Naive thymus-derived CD4-positive, alpha-beta T cell (primary cell): ENCODE measurements at regions of chr22 and their contacts with region 1.

Region 1: GRCh38 chr22:41780746-41781505 is 19.6 kb upstream of the CCDC134 start:
- DNase-seq: peak; percentile 64 to 99 (median 96)
- ATAC-seq: peak; percentile 97
- H3K4me3 ChIP-seq: peak overlapping the region; percentile 67
- H3K4me3 Mint-ChIP-seq: peak overlapping the region; percentile 77 to 93 (median 89)
- H3K27ac ChIP-seq: peak overlapping the region; percentile 88
- H3K27ac Mint-ChIP-seq: peak overlapping the region; percentile 98 to 100 (median 100)
- H3K4me1 ChIP-seq: peaks cover 19 to 25% of the 10 kb centered on the region in 2 donors
- H3K4me1 Mint-ChIP-seq: peaks cover 32 to 71% (median 51%) of the 10 kb centered on the region in 7 donors
- H3K27me3 ChIP-seq: no peaks in the 10 kb centered on the region
- H3K27me3 Mint-ChIP-seq: no peaks in the 10 kb centered on the region

Region 2: GRCh38 chr22:40898850-40899357 is 882.0 kb before region 1 on chr22:
- CTCF ChIA-PET with region 1: no interaction called
- POLR2A ChIA-PET with region 1: no interaction called
- intact Hi-C with region 1: no loop called
- DNase-seq: peak in 7 of 9 donors; percentile 12 to 52 (median 37)
- ATAC-seq: peak; percentile 67
- H3K4me3 ChIP-seq: no peak overlapping the region
- H3K4me3 Mint-ChIP-seq: peak overlapping the region in 1 of 10 donors; percentile 28
- H3K27ac ChIP-seq: no peak overlapping the region
- H3K27ac Mint-ChIP-seq: peak overlapping the region in 2 of 9 donors; percentile 36 to 44
- H3K4me1 ChIP-seq: no peaks in the 10 kb centered on the region
- H3K4me1 Mint-ChIP-seq: peaks cover 4 to 9% (median 5%) of the 10 kb centered on the region in 7 donors
- H3K27me3 ChIP-seq: no peaks in the 10 kb centered on the region
- H3K27me3 Mint-ChIP-seq: no peaks in the 10 kb centered on the region

Region 3: DNA sequence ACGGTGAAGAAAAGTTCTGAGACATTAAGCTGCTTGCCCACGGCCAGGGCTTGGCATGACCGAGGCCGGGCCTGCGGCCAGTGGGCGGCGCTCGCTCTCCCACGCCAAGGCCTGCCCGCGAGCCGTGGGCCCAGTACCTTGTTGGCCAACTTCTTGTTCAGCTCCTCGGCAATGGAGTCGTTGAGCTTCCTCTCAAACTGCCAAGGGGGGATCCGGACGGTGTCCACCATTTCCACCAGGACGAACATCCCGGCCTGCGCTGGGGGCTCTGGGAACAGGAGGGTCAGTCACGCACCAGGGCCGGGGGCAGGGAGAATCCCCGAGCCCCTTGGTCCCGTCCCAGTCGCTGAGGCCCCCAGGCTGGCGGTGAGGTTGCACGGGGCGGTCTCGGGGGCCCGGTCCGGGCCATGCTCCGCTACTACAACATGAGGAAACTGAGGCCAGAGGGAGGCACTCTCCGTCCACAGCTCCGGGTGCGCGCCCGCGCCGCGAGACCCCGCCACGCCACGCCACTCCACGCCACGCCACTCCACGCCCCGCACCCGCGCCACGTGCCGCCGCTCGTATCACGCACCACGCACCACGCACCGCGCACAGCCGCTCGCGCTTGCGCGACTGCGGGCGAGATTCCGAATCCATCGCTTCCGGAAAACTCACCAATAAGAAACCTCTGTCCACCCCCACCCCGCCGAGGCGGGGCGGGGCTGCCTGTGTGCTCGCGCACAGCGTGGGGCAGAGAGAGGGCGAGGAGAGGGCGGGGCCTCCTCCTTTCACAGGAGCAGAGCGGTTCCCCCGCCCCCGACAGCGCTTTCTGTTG is 236.9 kb before region 1 on chr22 and contains the start of gene POLR3H:
- CTCF ChIA-PET with region 1: no interaction called
- POLR2A ChIA-PET with region 1: no interaction called
- intact Hi-C with region 1: loop called in 1 of 2 experiments (anchors 2 kb)
- DNase-seq: peak; percentile 89 to 97 (median 95)
- ATAC-seq: peak; percentile 100
- H3K4me3 ChIP-seq: peak within 1 kb of the TSS; percentile 96
- H3K4me3 Mint-ChIP-seq: peak within 1 kb of the TSS; percentile 82 to 100 (median 97)
- H3K27ac ChIP-seq: peak within 1 kb of the TSS; percentile 84
- H3K27ac Mint-ChIP-seq: peak within 1 kb of the TSS; percentile 88 to 98 (median 95)
- H3K4me1 ChIP-seq: peaks cover 7 to 15% of the 10 kb centered on the region in 2 donors
- H3K4me1 Mint-ChIP-seq: peaks cover 30 to 52% (median 45%) of the 10 kb centered on the region in 7 donors
- H3K27me3 ChIP-seq: no peaks in the 10 kb centered on the region
- H3K27me3 Mint-ChIP-seq: no peaks in the 10 kb centered on the region
- total RNA-seq, gene POLR3H: 21.7 to 59.6 (median 28.5) TPM

Region 4: DNA sequence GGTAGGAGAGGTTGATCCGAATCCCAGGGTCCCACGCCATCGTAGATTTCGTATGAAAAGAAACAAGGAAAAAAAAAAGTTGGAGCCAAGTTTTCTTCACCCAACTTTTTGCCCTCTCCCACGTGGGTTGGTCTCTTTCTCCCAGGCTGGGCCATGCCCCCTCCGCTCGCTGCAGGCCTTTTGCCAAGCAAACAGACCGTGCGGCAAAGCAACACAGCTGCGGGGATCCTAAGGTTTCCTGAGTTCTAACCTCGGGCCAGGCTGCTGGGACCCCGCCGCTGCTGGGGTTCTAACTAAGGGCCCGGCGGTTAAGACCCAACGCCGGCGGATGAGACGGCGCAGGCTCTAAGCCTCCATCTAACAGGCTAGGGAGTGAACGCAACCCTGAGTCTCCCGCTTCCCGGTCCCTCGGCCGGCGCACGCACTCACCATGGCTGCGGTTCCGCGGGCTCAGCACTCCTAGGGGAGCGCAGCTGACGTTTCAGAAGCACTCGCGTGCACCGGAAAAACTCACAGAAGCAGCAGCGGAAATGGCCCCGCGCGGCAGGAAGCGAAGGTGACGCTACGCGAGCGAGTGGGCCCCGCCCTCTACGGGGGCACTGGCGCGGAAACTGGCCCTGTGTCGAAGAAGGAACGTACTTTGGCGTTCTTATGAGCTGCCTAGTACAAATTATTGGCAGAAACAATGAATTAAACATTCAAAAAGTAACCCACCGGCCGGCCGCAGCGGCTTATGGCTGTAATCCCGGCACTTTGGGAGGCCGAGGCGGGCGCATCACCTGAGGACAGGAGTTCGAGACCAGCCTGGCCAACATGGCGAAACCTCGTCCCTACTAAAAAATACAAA is 92.3 kb before region 1 on chr22 and contains the start of gene SNU13:
- CTCF ChIA-PET with region 1: no interaction called
- POLR2A ChIA-PET with region 1: interaction called, 10 read pairs
- intact Hi-C with region 1: loop called (anchors 2 kb)
- DNase-seq: peak; percentile 79 to 94 (median 92)
- ATAC-seq: peak; percentile 97
- H3K4me3 ChIP-seq: peak within 1 kb of the TSS; percentile 98
- H3K4me3 Mint-ChIP-seq: peak within 1 kb of the TSS; percentile 90 to 100 (median 96)
- H3K27ac ChIP-seq: peak within 1 kb of the TSS; percentile 95
- H3K27ac Mint-ChIP-seq: peak within 1 kb of the TSS; percentile 94 to 100 (median 99)
- H3K4me1 ChIP-seq: peaks cover 12 to 13% of the 10 kb centered on the region in 2 donors
- H3K4me1 Mint-ChIP-seq: peaks cover 18 to 51% (median 37%) of the 10 kb centered on the region in 7 donors
- H3K27me3 ChIP-seq: no peaks in the 10 kb centered on the region
- H3K27me3 Mint-ChIP-seq: no peaks in the 10 kb centered on the region
- total RNA-seq, gene SNU13: 117 to 180 (median 122) TPM

Region 5: GRCh38 chr22:41746567-41747400 is 34.1 kb before region 1 on chr22:
- CTCF ChIA-PET with region 1: interaction called, 30 read pairs
- POLR2A ChIA-PET with region 1: interaction called, 11 read pairs
- intact Hi-C with region 1: loop called in 1 of 2 experiments (anchors 1 kb)
- DNase-seq: peak; percentile 23 to 65 (median 52)
- ATAC-seq: peak; percentile 92
- H3K4me3 ChIP-seq: no peak overlapping the region
- H3K4me3 Mint-ChIP-seq: no peak overlapping the region
- H3K27ac ChIP-seq: no peak overlapping the region
- H3K27ac Mint-ChIP-seq: peak overlapping the region in 2 of 9 donors; percentile 2 to 36
- H3K4me1 ChIP-seq: no peaks in the 10 kb centered on the region
- H3K4me1 Mint-ChIP-seq: peaks cover 0 to 6% (median 0%) of the 10 kb centered on the region in 7 donors
- H3K27me3 ChIP-seq: no peaks in the 10 kb centered on the region
- H3K27me3 Mint-ChIP-seq: peaks cover 0 to 48% (median 0%) of the 10 kb centered on the region in 5 donors

Region 6: DNA sequence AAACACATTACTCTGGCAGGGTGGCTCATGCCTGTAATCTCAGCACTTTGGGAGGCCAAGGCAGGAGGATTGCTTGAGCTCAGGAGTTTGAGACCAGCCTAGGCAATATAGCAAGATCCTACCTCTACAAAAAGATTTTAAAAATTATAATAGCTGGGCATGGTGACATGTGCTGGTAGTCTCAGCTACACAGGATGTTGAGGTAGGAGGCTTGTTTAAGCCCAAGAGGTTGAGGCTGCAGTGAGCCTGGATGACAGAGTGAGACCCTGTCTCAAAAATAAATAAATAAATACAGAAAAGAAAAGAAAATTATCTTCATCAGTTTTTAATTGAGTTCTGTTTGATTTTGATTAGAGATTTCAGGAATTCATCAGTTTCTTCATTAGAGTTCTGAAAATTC is 24.7 kb after region 1 on chr22:
- CTCF ChIA-PET with region 1: interaction called, 21 read pairs
- POLR2A ChIA-PET with region 1: interaction called, 366 read pairs
- intact Hi-C with region 1: loop called (anchors 1 kb)
- DNase-seq: no peak
- ATAC-seq: no peak
- H3K4me3 ChIP-seq: no peak overlapping the region
- H3K4me3 Mint-ChIP-seq: no peak overlapping the region
- H3K27ac ChIP-seq: no peak overlapping the region
- H3K27ac Mint-ChIP-seq: peak overlapping the region in 2 of 9 donors; percentile 28 to 38
- H3K4me1 ChIP-seq: peaks cover 11 to 12% of the 10 kb centered on the region in 2 donors
- H3K4me1 Mint-ChIP-seq: peaks cover 23 to 43% (median 30%) of the 10 kb centered on the region in 7 donors
- H3K27me3 ChIP-seq: no peaks in the 10 kb centered on the region
- H3K27me3 Mint-ChIP-seq: no peaks in the 10 kb centered on the region

Region 7: DNA sequence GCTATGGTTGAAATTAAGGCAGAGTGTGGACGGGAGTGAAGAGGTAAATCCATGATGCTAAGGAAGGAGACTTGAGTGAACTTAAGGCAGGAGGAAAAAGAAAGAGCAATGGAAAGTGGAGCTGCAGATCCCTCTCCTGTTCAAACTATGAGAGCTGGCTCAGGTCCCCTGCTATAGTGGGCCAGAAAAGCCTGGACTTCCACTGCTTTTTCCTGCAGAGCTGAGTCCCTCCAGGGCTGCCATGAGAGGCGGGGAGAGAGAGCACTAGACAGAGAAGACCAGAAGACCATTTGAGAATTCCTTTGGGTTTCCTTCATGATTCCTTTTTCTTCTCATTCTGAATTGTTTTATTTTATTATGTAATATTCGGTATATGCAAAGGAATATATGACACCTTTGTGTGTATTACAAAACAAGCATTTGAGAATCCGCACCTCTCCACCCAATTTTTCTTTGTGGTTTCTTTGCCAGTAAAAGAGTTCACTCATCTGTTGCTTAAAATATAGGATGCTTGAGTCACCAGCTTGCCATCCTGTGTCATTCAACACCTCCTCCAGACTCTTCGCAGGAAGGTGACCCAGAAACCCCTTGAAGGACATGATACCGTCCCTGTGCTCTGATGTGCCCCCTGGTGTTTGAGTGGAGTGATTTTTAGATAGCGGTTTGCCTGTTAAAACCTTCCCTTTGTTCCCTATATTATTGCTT is 76.4 kb after region 1 on chr22:
- CTCF ChIA-PET with region 1: interaction called, 3 read pairs
- POLR2A ChIA-PET with region 1: interaction called, 10 read pairs
- intact Hi-C with region 1: no loop called
- DNase-seq: peak; percentile 27 to 76 (median 65)
- ATAC-seq: peak; percentile 87
- H3K4me3 ChIP-seq: no peak overlapping the region
- H3K4me3 Mint-ChIP-seq: peak overlapping the region; percentile 3 to 67 (median 36)
- H3K27ac ChIP-seq: no peak overlapping the region
- H3K27ac Mint-ChIP-seq: peak overlapping the region; percentile 62 to 91 (median 82)
- H3K4me1 ChIP-seq: peaks cover 17 to 26% of the 10 kb centered on the region in 2 donors
- H3K4me1 Mint-ChIP-seq: peaks cover 33 to 69% (median 54%) of the 10 kb centered on the region in 7 donors
- H3K27me3 ChIP-seq: no peaks in the 10 kb centered on the region
- H3K27me3 Mint-ChIP-seq: no peaks in the 10 kb centered on the region

Region 8: GRCh38 chr22:41946629-41947423 is 165.9 kb after region 1 on chr22 and contains the start of gene CENPM:
- CTCF ChIA-PET with region 1: interaction called, 7 read pairs
- POLR2A ChIA-PET with region 1: interaction called, 14 read pairs
- intact Hi-C with region 1: no loop called
- DNase-seq: peak; percentile 71 to 94 (median 84)
- ATAC-seq: peak; percentile 97
- H3K4me3 ChIP-seq: peak within 1 kb of the TSS; percentile 82
- H3K4me3 Mint-ChIP-seq: peak within 1 kb of the TSS; percentile 83 to 93 (median 91)
- H3K27ac ChIP-seq: peak within 1 kb of the TSS; percentile 37
- H3K27ac Mint-ChIP-seq: peak within 1 kb of the TSS in 7 of 9 donors; percentile 63 to 93 (median 68)
- H3K4me1 ChIP-seq: peaks cover 3 to 13% of the 10 kb centered on the region in 2 donors
- H3K4me1 Mint-ChIP-seq: peaks cover 0 to 41% (median 10%) of the 10 kb centered on the region in 7 donors
- H3K27me3 ChIP-seq: no peaks in the 10 kb centered on the region
- H3K27me3 Mint-ChIP-seq: no peaks in the 10 kb centered on the region
- total RNA-seq, gene CENPM: 5.1 to 51.1 (median 10.8) TPM